Psoas muscle (tissue), 8 donors: ENCODE measurements at regions of chr17 and their contacts with region 1.

Region 1: GRCh38 chr17:64135000-64135399 is 5.1 kb upstream of the ERN1 start:
- DNase-seq: no peak
- ATAC-seq: no peak
- H3K4me3 ChIP-seq: no peak overlapping the region
- H3K27ac ChIP-seq: no peak overlapping the region
- H3K4me1 ChIP-seq: no peaks in the 10 kb centered on the region
- H3K27me3 ChIP-seq: no peaks in the 10 kb centered on the region
- CTCF ChIP-seq: no peak

Region 2: DNA sequence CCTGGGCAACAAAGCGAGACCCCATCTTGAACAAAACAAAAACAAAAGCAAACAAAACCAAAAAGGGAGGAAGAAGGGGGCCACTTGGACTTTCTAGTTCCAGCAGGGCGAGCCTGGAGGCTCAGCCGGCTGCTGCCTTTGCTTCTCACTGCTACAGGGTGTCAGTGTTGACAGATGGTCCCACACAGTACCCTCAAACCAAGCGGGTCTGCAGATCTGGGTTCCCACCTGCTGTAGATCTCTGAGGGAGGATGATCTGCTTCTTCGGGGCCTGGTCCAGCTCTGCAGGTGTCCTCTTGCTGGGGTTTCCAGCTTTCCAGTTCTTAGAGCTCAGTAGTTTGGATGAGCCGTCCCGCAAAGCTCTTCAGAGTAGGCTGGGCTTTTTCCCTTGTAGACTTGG is 230.7 kb before region 1 on chr17:
- intact Hi-C with region 1: loop called in 1 of 2 experiments (anchors 5 kb)
- DNase-seq: no peak
- ATAC-seq: no peak
- H3K4me3 ChIP-seq: no peak overlapping the region
- H3K27ac ChIP-seq: no peak overlapping the region
- H3K4me1 ChIP-seq: no peaks in the 10 kb centered on the region
- H3K27me3 ChIP-seq: no peaks in the 10 kb centered on the region
- CTCF ChIP-seq: no peak

Region 3: GRCh38 chr17:64074704-64075426 is 60.1 kb before region 1 on chr17:
- intact Hi-C with region 1: no loop called
- DNase-seq: no peak
- ATAC-seq: peak in 2 of 4 donors; percentile 17 to 36
- H3K4me3 ChIP-seq: no peak overlapping the region
- H3K27ac ChIP-seq: no peak overlapping the region
- H3K4me1 ChIP-seq: no peaks in the 10 kb centered on the region
- H3K27me3 ChIP-seq: no peaks in the 10 kb centered on the region
- CTCF ChIP-seq: no peak